ENCODE measurements at regions of chr3 and their contacts with region 1.

Region 1: GRCh38 chr3:33074217-33075067 is 22.5 kb downstream of the GLB1 start:
- DNase-seq: peak in 2 of 3 donors; percentile 55 to 68
- ATAC-seq: peak; percentile 91 to 94 (median 92)
- H3K4me3 ChIP-seq: no peak overlapping the region
- H3K27ac ChIP-seq: no peak overlapping the region
- H3K4me1 ChIP-seq: no peaks in the 10 kb centered on the region
- H3K27me3 ChIP-seq: no peaks in the 10 kb centered on the region
- CTCF ChIP-seq: peak; percentile 74 to 87 (median 86)
- POLR2A ChIP-seq: no peak

Region 2: DNA sequence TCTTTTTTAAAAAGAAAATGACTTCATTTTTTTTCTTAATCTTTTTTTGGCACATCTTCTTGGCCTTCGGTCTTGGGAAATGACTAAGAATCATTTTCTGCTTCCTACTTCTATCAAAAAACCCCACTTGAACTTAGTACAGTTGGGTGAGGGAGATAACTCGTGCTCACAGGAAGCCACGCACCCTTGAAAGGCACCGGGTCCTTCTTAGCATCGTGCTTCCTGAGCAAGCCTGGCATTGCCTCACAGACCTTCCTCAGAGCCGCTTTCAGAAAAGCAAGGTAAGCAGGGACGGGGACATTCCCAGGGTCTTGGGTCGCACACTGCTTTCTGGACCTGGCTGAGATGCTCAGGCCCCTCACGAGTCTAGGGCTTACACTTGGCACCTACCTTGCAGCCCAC is 123.0 kb before region 1 on chr3 and contains the start of gene CCR4:
- intact Hi-C with region 1: loop called (anchors 10 kb)
- DNase-seq: no peak
- ATAC-seq: peak; percentile 28 to 59 (median 34)
- H3K4me3 ChIP-seq: no peak within 1 kb of the TSS
- H3K27ac ChIP-seq: no peak within 1 kb of the TSS
- H3K4me1 ChIP-seq: no peaks in the 10 kb centered on the region
- H3K27me3 ChIP-seq: no peaks in the 10 kb centered on the region
- CTCF ChIP-seq: no peak
- POLR2A ChIP-seq: no peak
- total RNA-seq, gene CCR4: 0.06 to 0.23 (median 0.11) TPM